ENCODE measurements at regions of chr5 and their contacts with region 1.

Region 1: GRCh38 chr5:132813599-132814502 is 749 bp downstream of the SOWAHA start:
- DNase-seq: no peak
- ATAC-seq: peak; percentile 79
- H3K4me3 ChIP-seq: peak overlapping the region in 1 of 2 experiments; percentile 39; a peak in 2 of 4 replicates
- H3K27ac ChIP-seq: no peak overlapping the region
- H3K4me1 ChIP-seq: peaks cover 4% of the 10 kb centered on the region; the same call in 1 of the 2 replicates
- H3K27me3 ChIP-seq: peaks cover 10% of the 10 kb centered on the region
- CTCF ChIP-seq: no peak

Region 2: DNA sequence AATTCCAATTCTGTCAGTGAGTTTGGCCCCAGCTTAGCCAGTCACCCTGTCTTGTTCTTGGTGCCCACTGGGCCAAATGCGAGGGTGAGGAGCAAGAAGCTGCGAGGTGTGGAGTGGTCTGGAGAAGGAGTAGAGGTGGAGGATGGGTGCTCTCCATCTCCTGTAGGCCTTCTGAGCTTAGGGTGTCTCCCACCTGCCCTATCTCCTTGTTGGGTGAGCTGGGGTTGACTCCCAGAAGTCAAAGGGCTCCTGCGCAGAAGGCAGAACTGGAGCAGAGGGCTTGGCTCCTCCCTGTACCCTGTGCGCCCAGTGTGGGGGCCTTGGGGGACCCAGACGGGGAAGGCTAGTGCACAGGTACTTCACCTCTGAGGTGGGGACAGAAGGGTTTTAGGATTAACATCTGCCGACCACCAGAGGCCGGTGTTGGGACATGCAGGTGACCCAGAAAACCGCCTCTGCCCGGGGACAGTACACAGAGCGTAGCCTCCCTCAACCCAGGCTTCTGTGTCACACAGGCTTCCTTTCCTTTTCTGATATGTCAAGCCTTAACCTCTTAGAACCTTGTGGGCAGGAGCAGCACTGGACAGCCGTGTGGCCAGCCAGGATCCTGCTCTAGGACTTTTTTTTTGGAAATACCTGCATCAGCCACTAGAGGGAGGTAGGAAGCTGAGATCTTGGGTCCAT is 287.4 kb before region 1 on chr5:
- CTCF ChIA-PET with region 1: no interaction called
- POLR2A ChIA-PET with region 1: no interaction called
- in situ Hi-C with region 1: no loop called
- intact Hi-C with region 1: loop called (anchors 10 kb)
- DNase-seq: peak; percentile 63
- ATAC-seq: peak; percentile 95
- H3K4me3 ChIP-seq: peak overlapping the region in 1 of 2 experiments; percentile 33; a peak in 2 of 4 replicates
- H3K27ac ChIP-seq: no peak overlapping the region
- H3K4me1 ChIP-seq: no peaks in the 10 kb centered on the region
- H3K27me3 ChIP-seq: peaks cover 2% of the 10 kb centered on the region; the same call in 1 of the 2 replicates
- CTCF ChIP-seq: peak; percentile 98

Region 3: GRCh38 chr5:132629230-132629944 is 184.5 kb before region 1 on chr5:
- CTCF ChIA-PET with region 1: no interaction called
- POLR2A ChIA-PET with region 1: no interaction called
- in situ Hi-C with region 1: no loop called
- intact Hi-C with region 1: no loop called
- DNase-seq: no peak
- ATAC-seq: no peak
- H3K4me3 ChIP-seq: no peak overlapping the region
- H3K27ac ChIP-seq: no peak overlapping the region
- H3K4me1 ChIP-seq: no peaks in the 10 kb centered on the region
- H3K27me3 ChIP-seq: no peaks in the 10 kb centered on the region
- CTCF ChIP-seq: no peak

Region 4: DNA sequence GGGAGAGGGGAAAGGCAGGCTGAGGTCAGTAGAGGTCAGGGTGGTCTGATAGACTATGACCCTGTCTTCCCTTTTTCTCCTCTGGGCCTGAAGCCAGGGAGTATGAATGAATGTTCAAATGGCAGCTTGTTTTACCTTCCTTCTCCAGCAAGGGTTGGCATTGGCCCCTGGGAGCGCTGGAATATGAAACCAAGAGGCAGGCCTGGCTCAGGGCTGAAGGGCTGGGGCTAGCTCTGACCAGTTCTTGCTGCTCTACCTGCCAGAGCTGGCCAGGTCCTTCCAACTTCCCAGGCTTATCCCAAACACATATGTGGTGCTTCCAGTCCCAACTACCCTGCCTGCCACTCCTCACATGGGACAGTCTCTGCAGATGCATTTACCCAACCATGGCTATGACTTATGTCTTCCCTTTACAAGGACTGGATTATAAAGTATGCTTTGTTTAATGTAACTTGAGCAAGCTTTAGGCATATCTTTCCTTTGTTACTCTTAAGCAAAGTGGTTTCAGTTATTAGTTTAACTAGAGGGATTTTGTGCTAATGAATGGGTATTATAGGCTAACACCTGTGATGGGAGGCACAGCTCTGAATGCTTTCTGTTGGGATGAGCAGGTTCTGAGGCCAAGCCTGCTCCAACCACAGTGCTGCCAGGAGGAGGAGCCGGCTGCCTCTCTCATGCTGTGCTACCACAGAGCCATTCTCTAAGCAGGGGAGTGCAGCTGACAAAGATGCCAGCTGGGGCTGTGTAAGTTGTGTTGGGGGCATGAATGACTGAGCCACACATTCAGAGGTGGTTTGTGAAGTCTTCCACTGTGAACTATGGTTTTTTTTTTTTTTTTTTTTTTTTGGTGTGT is 60.5 kb before region 1 on chr5:
- CTCF ChIA-PET with region 1: interaction called, 4 read pairs
- POLR2A ChIA-PET with region 1: interaction called, 5 read pairs
- in situ Hi-C with region 1: no loop called
- intact Hi-C with region 1: loop called (anchors 10 kb)
- DNase-seq: no peak
- ATAC-seq: peak; percentile 76
- H3K4me3 ChIP-seq: no peak overlapping the region
- H3K27ac ChIP-seq: no peak overlapping the region
- H3K4me1 ChIP-seq: no peaks in the 10 kb centered on the region
- H3K27me3 ChIP-seq: no peaks in the 10 kb centered on the region
- CTCF ChIP-seq: peak; percentile 53

Region 5: GRCh38 chr5:132763181-132764052 is 50.4 kb before region 1 on chr5:
- CTCF ChIA-PET with region 1: interaction called, 10 read pairs
- POLR2A ChIA-PET with region 1: no interaction called
- in situ Hi-C with region 1: no loop called
- intact Hi-C with region 1: loop called (anchors 10 kb)
- DNase-seq: no peak
- ATAC-seq: no peak
- H3K4me3 ChIP-seq: no peak overlapping the region
- H3K27ac ChIP-seq: no peak overlapping the region
- H3K4me1 ChIP-seq: no peaks in the 10 kb centered on the region
- H3K27me3 ChIP-seq: no peaks in the 10 kb centered on the region
- CTCF ChIP-seq: no peak